Activated CD8-positive, alpha-beta T cell treated with anti-CD3 and anti-CD28 coated beads, Interleukin-2, amount 10 ng/mL, durations not matched to agents 7 days and 5 days (primary cell): ENCODE measurements at regions of chr7 and their contacts with region 1.

Region 1: DNA sequence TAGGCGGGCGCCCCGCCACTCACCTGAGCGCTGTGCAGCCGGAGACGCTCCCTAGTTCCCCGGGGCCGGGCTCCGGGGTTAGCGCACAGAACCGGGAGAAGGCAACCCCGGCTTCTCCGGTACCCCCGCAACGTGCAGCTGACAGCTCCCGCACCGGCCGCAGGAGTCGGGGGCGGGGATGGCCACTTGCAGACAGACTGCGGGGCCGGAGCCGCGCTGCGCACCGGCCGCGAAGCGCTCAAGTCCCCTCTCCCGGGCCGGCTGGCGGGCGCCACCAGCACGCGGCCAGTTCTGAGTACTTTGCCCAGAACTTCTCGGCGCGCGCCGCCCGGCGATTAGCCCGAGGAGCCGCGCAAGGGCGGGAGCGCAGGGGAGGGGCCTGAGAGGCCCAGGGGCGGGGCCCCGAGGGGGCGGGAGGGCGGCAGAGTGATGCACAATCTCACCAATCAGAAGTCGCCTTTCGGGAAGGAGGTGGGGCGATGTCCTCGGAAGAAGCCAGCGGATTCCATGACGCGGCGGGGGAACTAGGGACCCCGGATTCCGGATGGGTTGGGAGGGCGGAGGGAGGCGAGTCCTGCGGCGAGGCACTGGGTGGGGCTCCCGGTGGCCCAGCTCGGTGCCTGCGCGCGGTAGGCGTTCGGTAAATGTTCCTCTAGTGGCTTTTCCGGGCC is at the start of gene OSBPL3:
- DNase-seq: peak; percentile 97
- ATAC-seq: peak; percentile 79
- H3K4me3 Mint-ChIP-seq: peak within 1 kb of the TSS; percentile 95
- H3K27ac Mint-ChIP-seq: peak within 1 kb of the TSS; percentile 97
- H3K4me1 Mint-ChIP-seq: peaks cover 69% of the 10 kb centered on the region
- H3K27me3 Mint-ChIP-seq: peaks cover 7% of the 10 kb centered on the region
- total RNA-seq, gene OSBPL3: 73.0 to 83.0 TPM

Region 2: GRCh38 chr7:24825931-24826661 is 153.9 kb before region 1 on chr7:
- CTCF ChIA-PET with region 1: interaction called, 132 read pairs
- POLR2A ChIA-PET with region 1: interaction called, 51 read pairs
- DNase-seq: peak; percentile 30
- ATAC-seq: peak; percentile 35
- H3K4me3 Mint-ChIP-seq: peak overlapping the region; percentile 57
- H3K27ac Mint-ChIP-seq: peak overlapping the region; percentile 84
- H3K4me1 Mint-ChIP-seq: peaks cover 76% of the 10 kb centered on the region
- H3K27me3 Mint-ChIP-seq: no peaks in the 10 kb centered on the region

Region 3: GRCh38 chr7:24907311-24907886 is 72.6 kb before region 1 on chr7:
- CTCF ChIA-PET with region 1: interaction called, 37 read pairs
- POLR2A ChIA-PET with region 1: interaction called, 39 read pairs
- DNase-seq: peak; percentile 55
- ATAC-seq: peak; percentile 71
- H3K4me3 Mint-ChIP-seq: no peak overlapping the region
- H3K27ac Mint-ChIP-seq: no peak overlapping the region
- H3K4me1 Mint-ChIP-seq: peaks cover 41% of the 10 kb centered on the region
- H3K27me3 Mint-ChIP-seq: no peaks in the 10 kb centered on the region

Region 4: GRCh38 chr7:24965831-24966709 is 13.9 kb before region 1 on chr7:
- CTCF ChIA-PET with region 1: interaction called, 27 read pairs
- POLR2A ChIA-PET with region 1: interaction called, 34 read pairs
- DNase-seq: peak; percentile 59
- ATAC-seq: peak; percentile 81
- H3K4me3 Mint-ChIP-seq: peak overlapping the region; percentile 19
- H3K27ac Mint-ChIP-seq: peak overlapping the region; percentile 82
- H3K4me1 Mint-ChIP-seq: peaks cover 79% of the 10 kb centered on the region
- H3K27me3 Mint-ChIP-seq: no peaks in the 10 kb centered on the region

Region 5: GRCh38 chr7:25069900-25070443 is 90.0 kb after region 1 on chr7:
- CTCF ChIA-PET with region 1: interaction called, 16 read pairs
- POLR2A ChIA-PET with region 1: no interaction called
- DNase-seq: peak; percentile 71
- ATAC-seq: peak; percentile 76
- H3K4me3 Mint-ChIP-seq: no peak overlapping the region
- H3K27ac Mint-ChIP-seq: no peak overlapping the region
- H3K4me1 Mint-ChIP-seq: peaks cover 11% of the 10 kb centered on the region
- H3K27me3 Mint-ChIP-seq: peaks cover 9% of the 10 kb centered on the region

Region 6: GRCh38 chr7:25125137-25125946 is 145.3 kb after region 1 on chr7 and contains the start of gene CYCS:
- CTCF ChIA-PET with region 1: interaction called, 7 read pairs
- POLR2A ChIA-PET with region 1: interaction called, 10 read pairs
- DNase-seq: peak; percentile 100
- ATAC-seq: peak; percentile 95
- H3K4me3 Mint-ChIP-seq: peak within 1 kb of the TSS; percentile 86
- H3K27ac Mint-ChIP-seq: peak within 1 kb of the TSS; percentile 95
- H3K4me1 Mint-ChIP-seq: peaks cover 38% of the 10 kb centered on the region
- H3K27me3 Mint-ChIP-seq: no peaks in the 10 kb centered on the region
- total RNA-seq, gene CYCS: 153 to 157 TPM

Region 7: DNA sequence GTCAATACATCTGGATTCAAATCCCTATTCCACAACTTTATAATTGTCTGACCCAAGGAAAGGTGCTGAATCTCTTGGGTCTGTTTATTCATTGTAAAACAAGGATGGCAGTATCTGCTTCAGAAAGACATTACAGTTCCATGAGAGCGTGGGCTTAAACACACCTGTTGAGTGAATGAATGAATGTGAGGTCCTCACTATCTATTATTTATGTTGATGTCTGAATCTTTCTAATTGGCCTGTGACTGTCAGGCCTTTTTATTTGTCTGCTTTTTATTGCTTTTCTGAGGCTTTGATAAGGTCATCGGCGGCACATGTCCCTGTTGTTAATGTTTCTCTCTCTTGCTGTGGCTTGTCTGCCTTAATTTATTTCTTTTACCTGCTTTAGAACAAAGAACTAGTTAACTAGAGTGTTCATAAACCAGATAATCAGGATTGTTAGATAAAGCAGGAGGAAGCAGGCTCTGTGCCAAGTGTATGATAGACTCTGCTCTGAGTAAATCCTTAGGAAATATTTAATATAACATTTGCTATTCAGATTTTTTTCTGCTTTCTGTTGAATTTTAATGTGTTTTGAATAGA is 187.4 kb after region 1 on chr7:
- CTCF ChIA-PET with region 1: no interaction called
- POLR2A ChIA-PET with region 1: no interaction called
- DNase-seq: no peak
- ATAC-seq: no peak
- H3K4me3 Mint-ChIP-seq: no peak overlapping the region
- H3K27ac Mint-ChIP-seq: no peak overlapping the region
- H3K4me1 Mint-ChIP-seq: no peaks in the 10 kb centered on the region
- H3K27me3 Mint-ChIP-seq: no peaks in the 10 kb centered on the region

Region 8: GRCh38 chr7:25303281-25304156 is 323.5 kb after region 1 on chr7:
- CTCF ChIA-PET with region 1: no interaction called
- POLR2A ChIA-PET with region 1: no interaction called
- DNase-seq: no peak
- ATAC-seq: no peak
- H3K4me3 Mint-ChIP-seq: no peak overlapping the region
- H3K27ac Mint-ChIP-seq: no peak overlapping the region
- H3K4me1 Mint-ChIP-seq: no peaks in the 10 kb centered on the region
- H3K27me3 Mint-ChIP-seq: peaks cover 7% of the 10 kb centered on the region